ENCODE measurements at regions of chr6 and their contacts with region 1.

Region 1: DNA sequence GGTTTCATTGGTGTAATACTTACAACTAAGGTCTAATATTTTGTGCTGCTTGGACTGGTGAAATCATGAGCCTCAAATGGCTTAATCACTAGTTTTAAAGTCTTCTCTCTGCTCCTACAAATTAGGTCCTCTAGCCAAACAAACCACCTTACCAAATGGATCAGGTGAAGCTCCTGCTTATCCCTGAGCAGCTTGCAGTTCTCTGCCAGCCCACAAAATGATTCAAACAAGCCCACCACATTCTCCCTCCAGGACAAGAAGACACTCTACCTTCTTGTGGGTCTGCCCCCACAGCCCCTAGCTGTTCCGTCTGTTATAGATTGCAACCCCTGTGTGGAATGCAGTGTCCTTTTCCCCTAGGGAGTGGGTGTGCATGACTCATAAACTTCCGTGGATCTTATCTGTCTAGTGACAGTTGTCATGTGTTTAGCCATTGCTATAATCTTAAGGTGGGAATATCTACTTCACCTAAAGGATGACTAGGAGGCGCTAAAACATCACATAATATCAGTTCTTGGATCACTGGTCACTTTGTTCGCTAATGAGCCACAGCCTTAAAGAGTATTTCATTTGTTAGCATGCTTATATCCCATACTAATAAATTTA is 940.5 kb upstream of the MANEA start:
- H3K4me3 ChIP-seq: no peak overlapping the region
- H3K27ac ChIP-seq: no peak overlapping the region
- H3K4me1 ChIP-seq: no peaks in the 10 kb centered on the region
- CTCF ChIP-seq: no peak

Region 2: GRCh38 chr6:94443701-94444100 is 193.2 kb before region 1 on chr6:
- CTCF ChIA-PET with region 1: no interaction called
- POLR2A ChIA-PET with region 1: no interaction called
- H3K4me3 ChIP-seq: no peak overlapping the region
- H3K27ac ChIP-seq: no peak overlapping the region
- H3K4me1 ChIP-seq: no peaks in the 10 kb centered on the region
- CTCF ChIP-seq: no peak

Region 3: DNA sequence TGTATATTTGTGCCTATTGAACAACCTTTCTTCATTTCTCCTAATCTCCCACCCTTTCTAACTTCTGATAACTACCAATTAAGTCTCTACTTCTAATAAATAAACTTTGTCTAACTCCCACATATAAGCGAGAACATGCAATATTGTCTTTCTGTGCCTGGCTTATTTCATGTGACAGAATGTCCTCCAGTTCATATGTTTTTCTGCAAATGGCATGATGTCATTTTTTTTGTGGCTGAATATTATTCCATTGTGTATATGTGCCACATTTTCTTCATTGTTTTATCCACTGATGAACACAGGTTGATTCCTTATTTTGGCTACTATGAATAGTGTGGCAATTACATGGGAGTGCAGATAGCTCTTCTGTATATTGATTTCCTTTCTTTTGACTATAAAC is 101.1 kb before region 1 on chr6:
- CTCF ChIA-PET with region 1: no interaction called
- POLR2A ChIA-PET with region 1: no interaction called
- H3K4me3 ChIP-seq: no peak overlapping the region
- H3K27ac ChIP-seq: no peak overlapping the region
- H3K4me1 ChIP-seq: no peaks in the 10 kb centered on the region
- CTCF ChIP-seq: no peak

Region 4: DNA sequence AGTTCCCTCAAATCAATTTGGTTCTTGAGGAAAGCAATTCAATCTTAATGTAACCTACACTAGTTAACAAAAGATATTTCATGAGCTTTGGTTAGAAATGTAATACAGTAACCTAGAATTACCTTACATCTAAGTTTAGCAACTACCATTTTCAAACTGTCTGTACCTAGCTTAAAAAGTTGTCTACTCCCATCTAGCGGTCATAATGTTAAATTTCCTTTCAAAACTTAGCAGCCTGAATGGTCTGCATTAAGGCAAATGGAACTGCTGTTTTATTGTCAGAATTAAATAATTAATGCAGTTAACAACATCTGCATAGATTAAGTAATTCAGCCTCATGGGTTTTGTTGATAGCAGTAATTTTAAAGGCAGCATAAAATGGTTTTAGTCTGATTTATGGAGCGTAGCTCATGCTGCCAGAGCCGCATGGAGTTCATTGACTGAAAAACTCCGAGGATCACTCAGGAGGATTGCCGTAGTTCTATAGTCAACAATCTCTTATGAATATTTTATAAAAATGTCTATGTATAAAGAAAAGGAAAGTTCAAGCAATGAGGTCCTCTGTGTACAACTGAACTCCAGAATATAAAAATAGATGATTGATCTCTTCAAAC is 455.0 kb after region 1 on chr6:
- CTCF ChIA-PET with region 1: interaction called, 12 read pairs
- POLR2A ChIA-PET with region 1: no interaction called
- H3K4me3 ChIP-seq: no peak overlapping the region
- H3K27ac ChIP-seq: no peak overlapping the region
- H3K4me1 ChIP-seq: no peaks in the 10 kb centered on the region
- CTCF ChIP-seq: 0 out of 2 replicates have a peak, but pooled peaks have one; percentile 20

Measured in HEK293 (cell line).